AG04450 (cell line): ENCODE measurements at regions of chr4 and their contacts with region 1.

Region 1: GRCh38 chr4:149999485-150000074 is 78.7 kb upstream of the DCLK2 start:
- DNase-seq: peak; percentile 61
- H3K4me3 ChIP-seq: no peak overlapping the region
- H3K27ac ChIP-seq: no peak overlapping the region
- H3K27me3 ChIP-seq: no peaks in the 10 kb centered on the region
- CTCF ChIP-seq: peak; percentile 87

Region 2: DNA sequence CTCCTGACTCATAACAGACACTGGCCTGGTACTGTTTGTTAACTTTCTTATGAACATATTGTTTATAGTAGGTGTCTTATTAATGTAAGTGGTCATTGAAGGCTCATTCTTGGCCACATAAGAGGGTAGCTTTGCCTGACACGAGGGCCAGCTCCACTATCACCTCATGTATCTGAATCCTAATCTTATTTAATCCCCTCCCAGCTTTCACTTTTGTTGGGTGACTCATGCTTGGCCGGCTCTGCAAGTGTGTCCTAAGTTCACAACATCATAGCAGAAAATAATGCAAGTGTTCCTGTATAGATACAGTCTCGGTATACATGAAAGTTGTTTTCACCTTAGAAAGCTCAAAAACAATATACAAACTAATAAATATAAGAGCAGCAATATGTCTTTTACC is 467.7 kb before region 1 on chr4:
- CTCF ChIA-PET with region 1: no interaction called
- POLR2A ChIA-PET with region 1: no interaction called
- DNase-seq: peak; percentile 21
- H3K4me3 ChIP-seq: no peak overlapping the region
- H3K27ac ChIP-seq: no peak overlapping the region
- H3K27me3 ChIP-seq: no peaks in the 10 kb centered on the region
- CTCF ChIP-seq: no peak

Region 3: DNA sequence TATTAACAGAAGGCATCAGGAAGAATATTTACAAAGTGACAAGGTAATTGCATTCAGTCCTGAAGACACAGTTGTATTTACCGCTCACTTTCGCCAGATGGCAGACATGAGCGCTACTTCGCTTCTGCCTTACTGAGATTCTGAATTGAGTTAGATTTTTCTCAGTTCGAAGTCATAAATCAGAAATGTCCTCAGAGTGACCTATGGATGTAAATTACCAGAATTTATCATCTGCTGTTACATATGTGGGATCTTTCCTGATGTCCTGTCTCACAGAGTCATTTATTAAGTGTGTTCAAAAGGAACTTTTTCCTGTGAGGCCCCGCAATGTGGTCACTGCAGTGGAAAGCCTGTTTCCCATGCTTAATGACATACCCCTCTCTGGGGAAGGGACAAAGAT is 18.6 kb before region 1 on chr4:
- CTCF ChIA-PET with region 1: interaction called, 11 read pairs
- POLR2A ChIA-PET with region 1: no interaction called
- DNase-seq: no peak
- H3K4me3 ChIP-seq: no peak overlapping the region
- H3K27ac ChIP-seq: no peak overlapping the region
- H3K27me3 ChIP-seq: no peaks in the 10 kb centered on the region
- CTCF ChIP-seq: peak; percentile 87

Region 4: GRCh38 chr4:150217192-150217591 is 217.6 kb after region 1 on chr4:
- CTCF ChIA-PET with region 1: interaction called, 108 read pairs
- POLR2A ChIA-PET with region 1: no interaction called
- DNase-seq: no peak
- H3K4me3 ChIP-seq: no peak overlapping the region
- H3K27ac ChIP-seq: no peak overlapping the region
- H3K27me3 ChIP-seq: no peaks in the 10 kb centered on the region
- CTCF ChIP-seq: peak; percentile 54